ENCODE measurements at regions of chr20 and their contacts with region 1.

Region 1: GRCh38 chr20:58650776-58651558 is at the start of gene STX16:
- DNase-seq: peak; percentile 95
- ATAC-seq: peak; percentile 98
- total RNA-seq, gene STX16: 23.8 TPM

Region 2: GRCh38 chr20:58236612-58237330 is 414.2 kb before region 1 on chr20:
- intact Hi-C with region 1: loop called (anchors 2 kb)
- DNase-seq: peak; percentile 89
- ATAC-seq: peak; percentile 95

Region 3: DNA sequence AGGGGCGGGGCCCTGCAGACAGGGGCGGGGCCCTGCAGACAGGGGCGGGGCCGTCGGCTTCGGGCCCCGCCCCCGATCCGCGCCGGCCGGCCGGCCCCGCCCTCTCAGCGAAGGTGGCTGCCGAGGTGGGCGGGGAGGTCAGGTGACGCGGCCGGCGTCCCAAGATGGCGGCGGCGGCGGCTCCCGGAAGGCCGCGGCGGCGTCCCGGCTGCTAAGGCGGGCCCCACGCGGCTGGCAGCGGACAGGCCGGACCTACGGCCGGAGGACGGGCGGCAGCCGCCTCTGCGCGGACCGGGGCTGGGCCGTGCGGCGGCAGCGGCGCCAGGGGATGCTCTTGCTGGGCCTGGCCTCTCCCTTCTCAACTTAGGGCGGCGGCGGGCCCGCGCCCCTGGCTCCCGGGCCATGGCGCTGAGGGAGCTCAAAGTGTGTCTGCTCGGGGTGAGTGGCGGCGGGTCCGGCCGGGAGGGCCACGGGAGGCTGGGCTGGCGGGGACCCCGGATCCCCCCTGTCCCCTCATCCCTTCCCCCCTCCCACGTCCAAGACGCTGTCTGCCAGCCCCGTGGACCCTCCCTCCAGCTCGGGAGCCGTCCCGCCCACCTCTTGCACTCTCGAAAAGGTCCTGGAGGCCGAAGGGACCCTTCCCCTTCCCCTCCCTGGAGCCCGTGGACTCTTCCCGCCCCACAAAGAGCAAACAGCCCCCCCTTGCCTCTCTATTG is 341.2 kb before region 1 on chr20 and contains the start of gene RAB22A:
- intact Hi-C with region 1: loop called (anchors 5 kb)
- DNase-seq: peak; percentile 94
- ATAC-seq: peak; percentile 95
- total RNA-seq, gene RAB22A: 8.3 TPM

Region 4: GRCh38 chr20:58634521-58635278 is 16.3 kb before region 1 on chr20:
- intact Hi-C with region 1: no loop called
- DNase-seq: no peak
- ATAC-seq: no peak

Region 5: DNA sequence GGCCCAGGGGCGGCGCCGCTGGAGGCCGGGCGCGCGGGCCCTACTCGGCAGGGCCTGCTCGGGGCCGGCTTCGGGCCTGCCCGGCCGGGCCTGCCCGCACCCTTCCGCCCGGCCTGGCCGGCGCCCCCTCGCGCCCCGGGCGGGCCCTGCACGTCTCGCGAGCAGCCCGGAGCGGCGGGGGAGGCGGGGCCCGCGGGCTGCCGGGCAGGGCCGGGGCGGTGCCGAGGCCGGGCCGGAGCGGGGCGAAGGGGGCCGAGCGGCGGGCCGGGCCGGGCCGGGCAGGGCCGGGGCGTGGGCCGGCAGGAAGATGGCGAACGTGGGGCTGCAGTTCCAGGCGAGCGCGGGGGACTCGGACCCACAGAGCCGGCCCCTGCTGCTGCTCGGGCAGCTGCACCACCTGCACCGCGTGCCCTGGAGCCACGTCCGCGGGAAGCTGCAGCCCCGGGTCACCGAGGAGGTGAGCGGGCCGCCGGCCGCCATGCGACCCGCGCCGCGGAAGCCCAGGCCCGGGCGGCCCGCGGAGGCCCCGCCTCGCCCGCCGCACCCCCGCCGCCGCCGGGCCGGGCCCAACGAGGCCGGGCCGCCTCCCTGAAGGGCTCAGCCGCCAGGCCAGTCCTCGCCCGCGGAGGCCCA is 41.7 kb after region 1 on chr20 and contains the start of gene NPEPL1:
- intact Hi-C with region 1: loop called (anchors 2 kb)
- DNase-seq: peak; percentile 90
- ATAC-seq: peak; percentile 88
- total RNA-seq, gene NPEPL1: 23.3 TPM

Region 6: DNA sequence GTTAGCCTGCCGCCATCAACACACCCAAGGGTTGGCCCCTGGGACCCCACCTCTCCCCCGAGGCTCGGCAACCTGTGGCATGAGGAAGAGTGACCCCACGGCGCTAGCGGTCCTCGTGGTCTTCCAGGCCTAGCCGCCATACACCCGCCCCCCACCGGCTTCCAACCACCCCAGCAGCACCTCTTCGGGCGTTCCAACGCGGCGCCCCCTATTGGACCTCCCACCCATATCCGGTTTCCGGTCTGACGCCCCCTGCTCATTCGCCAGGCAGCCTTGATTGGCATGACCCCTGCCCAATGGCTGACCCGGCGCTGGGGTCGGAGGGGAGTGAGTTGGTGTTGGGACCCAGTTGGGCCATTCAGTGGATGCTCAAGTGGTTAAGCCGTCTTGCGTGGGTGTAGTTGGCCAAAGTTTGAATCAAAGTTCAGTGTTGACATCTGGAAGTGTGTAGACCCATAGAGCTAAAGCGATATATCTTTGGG is 199.8 kb after region 1 on chr20 and contains the start of gene GNAS-AS1:
- intact Hi-C with region 1: loop called (anchors 5 kb)
- DNase-seq: peak; percentile 87
- ATAC-seq: peak; percentile 87
- total RNA-seq, gene GNAS-AS1: 0.38 TPM